ENCODE measurements at regions of chr19 and their contacts with region 1.

Region 1: GRCh38 chr19:48588670-48589399 is 17.7 kb upstream of the SPACA4 start:
- DNase-seq: peak; percentile 77 to 82 (median 81)
- H3K4me3 ChIP-seq: peak overlapping the region in 1 of 2 donors; percentile 49
- H3K4me3 Mint-ChIP-seq: peak overlapping the region; percentile 53 to 91 (median 80)
- H3K27ac ChIP-seq: no peak overlapping the region
- H3K27ac Mint-ChIP-seq: peak overlapping the region; percentile 49 to 84 (median 75)
- H3K4me1 ChIP-seq: peaks cover 17% of the 10 kb centered on the region
- H3K4me1 Mint-ChIP-seq: peaks cover 13 to 33% (median 21%) of the 10 kb centered on the region in 4 donors
- H3K27me3 ChIP-seq: no peaks in the 10 kb centered on the region
- H3K27me3 Mint-ChIP-seq: no peaks in the 10 kb centered on the region

Region 2: DNA sequence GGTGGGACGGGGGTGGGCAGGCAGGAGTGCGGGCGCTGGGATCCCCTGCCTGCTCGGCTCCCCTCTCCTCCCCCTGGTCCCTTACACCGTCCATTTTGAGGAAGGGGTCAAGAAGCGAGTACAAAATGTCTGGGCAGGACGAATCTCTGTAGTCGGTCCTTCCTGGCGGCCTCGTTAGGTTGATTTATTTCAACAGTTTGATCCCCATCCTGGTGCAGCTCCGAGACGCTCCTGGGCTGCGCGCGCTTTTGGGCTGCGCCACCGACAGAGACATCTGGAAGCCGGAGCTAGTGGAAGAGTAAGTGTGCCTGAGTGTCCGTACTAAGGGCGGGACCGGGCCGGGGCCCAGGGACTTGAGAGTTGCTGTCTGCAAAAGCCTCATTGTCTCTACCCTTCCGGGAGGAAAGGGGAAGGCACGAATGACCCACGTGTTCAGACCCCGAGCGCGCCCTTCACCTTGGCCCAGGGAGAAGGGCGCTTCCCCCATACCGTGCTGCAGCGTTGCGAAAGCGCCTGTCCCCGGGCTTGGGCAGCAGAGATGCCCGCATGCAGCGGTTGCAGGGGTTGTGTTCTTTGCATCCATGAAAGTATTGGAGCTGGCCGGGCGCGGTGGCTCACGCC is 317.2 kb before region 1 on chr19:
- CTCF ChIA-PET with region 1: interaction called, 6 read pairs
- POLR2A ChIA-PET with region 1: no interaction called
- intact Hi-C with region 1: loop called (anchors 1 kb)
- DNase-seq: no peak
- H3K4me3 ChIP-seq: peak overlapping the region in 1 of 2 donors; percentile 19
- H3K4me3 Mint-ChIP-seq: peak overlapping the region; percentile 70 to 90 (median 80)
- H3K27ac ChIP-seq: no peak overlapping the region
- H3K27ac Mint-ChIP-seq: peak overlapping the region in 2 of 7 donors; percentile 63 to 70
- H3K4me1 ChIP-seq: peaks cover 4% of the 10 kb centered on the region
- H3K4me1 Mint-ChIP-seq: peaks cover 5 to 24% (median 15%) of the 10 kb centered on the region in 4 donors
- H3K27me3 ChIP-seq: no peaks in the 10 kb centered on the region
- H3K27me3 Mint-ChIP-seq: peaks cover 8 to 12% of the 10 kb centered on the region in 2 donors

Region 3: GRCh38 chr19:48492925-48493717 is 95.7 kb before region 1 on chr19:
- CTCF ChIA-PET with region 1: interaction called, 132 read pairs
- POLR2A ChIA-PET with region 1: interaction called, 8 read pairs
- intact Hi-C with region 1: loop called (anchors 1 kb)
- DNase-seq: peak; percentile 75 to 87 (median 77)
- H3K4me3 ChIP-seq: peak overlapping the region in 1 of 2 donors; percentile 47
- H3K4me3 Mint-ChIP-seq: peak overlapping the region; percentile 52 to 79 (median 70)
- H3K27ac ChIP-seq: no peak overlapping the region
- H3K27ac Mint-ChIP-seq: peak overlapping the region in 5 of 7 donors; percentile 51 to 84 (median 60)
- H3K4me1 ChIP-seq: peaks cover 40% of the 10 kb centered on the region
- H3K4me1 Mint-ChIP-seq: peaks cover 15 to 53% (median 28%) of the 10 kb centered on the region in 4 donors
- H3K27me3 ChIP-seq: peaks cover 15% of the 10 kb centered on the region
- H3K27me3 Mint-ChIP-seq: peaks cover 22 to 28% of the 10 kb centered on the region in 2 donors

Region 4: GRCh38 chr19:48501496-48502350 is 87.1 kb before region 1 on chr19:
- CTCF ChIA-PET with region 1: interaction called, 203 read pairs
- POLR2A ChIA-PET with region 1: interaction called, 11 read pairs
- intact Hi-C with region 1: loop called (anchors 1 kb)
- DNase-seq: peak; percentile 68 to 82 (median 76)
- H3K4me3 ChIP-seq: no peak overlapping the region
- H3K4me3 Mint-ChIP-seq: peak overlapping the region; percentile 22 to 82 (median 76)
- H3K27ac ChIP-seq: peak overlapping the region; percentile 26
- H3K27ac Mint-ChIP-seq: peak overlapping the region in 6 of 7 donors; percentile 48 to 87 (median 78)
- H3K4me1 ChIP-seq: peaks cover 13% of the 10 kb centered on the region
- H3K4me1 Mint-ChIP-seq: peaks cover 5 to 27% (median 14%) of the 10 kb centered on the region in 4 donors
- H3K27me3 ChIP-seq: no peaks in the 10 kb centered on the region
- H3K27me3 Mint-ChIP-seq: peaks cover 4 to 10% of the 10 kb centered on the region in 2 donors

Region 5: GRCh38 chr19:48513289-48514122 is 75.3 kb before region 1 on chr19:
- CTCF ChIA-PET with region 1: interaction called, 203 read pairs
- POLR2A ChIA-PET with region 1: interaction called, 4 read pairs
- intact Hi-C with region 1: no loop called
- DNase-seq: peak; percentile 70 to 88 (median 73)
- H3K4me3 ChIP-seq: peak overlapping the region; percentile 65 to 89
- H3K4me3 Mint-ChIP-seq: no peak overlapping the region
- H3K27ac ChIP-seq: peak overlapping the region; percentile 59
- H3K27ac Mint-ChIP-seq: peak overlapping the region in 3 of 7 donors; percentile 68 to 96 (median 91)
- H3K4me1 ChIP-seq: peaks cover 27% of the 10 kb centered on the region
- H3K4me1 Mint-ChIP-seq: peaks cover 6 to 16% (median 11%) of the 10 kb centered on the region in 4 donors
- H3K27me3 ChIP-seq: no peaks in the 10 kb centered on the region
- H3K27me3 Mint-ChIP-seq: no peaks in the 10 kb centered on the region

Region 6: GRCh38 chr19:48608798-48609263 is 20.0 kb after region 1 on chr19:
- CTCF ChIA-PET with region 1: interaction called, 82 read pairs
- POLR2A ChIA-PET with region 1: interaction called, 5 read pairs
- intact Hi-C with region 1: loop called (anchors 1 kb)
- DNase-seq: peak; percentile 57 to 63 (median 60)
- H3K4me3 ChIP-seq: no peak overlapping the region
- H3K4me3 Mint-ChIP-seq: peak overlapping the region in 6 of 8 donors; percentile 24 to 73 (median 53)
- H3K27ac ChIP-seq: no peak overlapping the region
- H3K27ac Mint-ChIP-seq: peak overlapping the region in 5 of 7 donors; percentile 22 to 94 (median 73)
- H3K4me1 ChIP-seq: no peaks in the 10 kb centered on the region
- H3K4me1 Mint-ChIP-seq: peaks cover 2 to 6% (median 5%) of the 10 kb centered on the region in 4 donors
- H3K27me3 ChIP-seq: no peaks in the 10 kb centered on the region
- H3K27me3 Mint-ChIP-seq: no peaks in the 10 kb centered on the region

Region 7: DNA sequence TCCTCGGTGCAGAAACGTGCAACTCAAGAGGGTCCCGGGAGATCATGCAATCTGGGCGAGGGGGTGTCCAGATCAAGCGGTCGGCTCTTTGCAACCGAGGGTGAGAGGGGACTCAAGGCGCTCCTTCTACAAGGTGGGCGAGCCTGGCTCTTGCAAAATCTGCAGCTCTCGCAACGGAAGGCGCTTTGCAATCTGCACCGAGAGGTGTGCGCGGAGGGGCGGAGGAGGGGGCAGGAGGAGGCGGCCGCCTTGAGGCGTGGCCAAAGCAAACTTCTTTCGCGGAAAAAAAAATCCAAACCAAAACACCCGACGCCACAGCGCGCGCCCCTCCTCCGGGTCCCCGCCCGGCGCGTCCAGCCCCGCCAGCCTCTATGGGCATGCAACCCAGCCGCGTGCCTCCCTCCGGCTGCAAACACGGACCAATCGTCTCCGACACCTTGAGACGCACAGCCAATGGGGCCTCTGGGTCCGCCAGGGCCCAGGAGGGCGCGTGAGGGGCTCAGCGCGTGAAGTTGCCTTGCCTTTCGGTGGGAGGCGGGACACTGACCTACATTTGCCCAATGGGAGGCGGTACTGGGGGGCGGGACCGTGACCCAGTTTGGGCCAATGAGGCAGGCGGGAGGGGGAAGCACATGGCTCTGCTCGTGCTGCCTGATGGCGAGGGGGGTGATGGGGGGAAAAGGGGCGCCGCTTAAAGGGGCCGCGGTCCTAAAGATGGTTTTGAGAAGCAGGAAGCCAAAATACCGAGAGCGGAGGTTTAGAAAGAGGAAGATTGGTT is 48.5 kb after region 1 on chr19 and contains the start of gene DBP:
- CTCF ChIA-PET with region 1: no interaction called
- POLR2A ChIA-PET with region 1: interaction called, 4 read pairs
- intact Hi-C with region 1: loop called (anchors 1 kb)
- DNase-seq: peak in 4 of 5 donors; percentile 99 to 100 (median 100)
- H3K4me3 ChIP-seq: peak within 1 kb of the TSS; percentile 52 to 88
- H3K4me3 Mint-ChIP-seq: peak within 1 kb of the TSS; percentile 89 to 100 (median 99)
- H3K27ac ChIP-seq: peak within 1 kb of the TSS; percentile 88
- H3K27ac Mint-ChIP-seq: peak within 1 kb of the TSS; percentile 93 to 100 (median 99)
- H3K4me1 ChIP-seq: peaks cover 46% of the 10 kb centered on the region
- H3K4me1 Mint-ChIP-seq: peaks cover 20 to 55% (median 40%) of the 10 kb centered on the region in 4 donors
- H3K27me3 ChIP-seq: no peaks in the 10 kb centered on the region
- H3K27me3 Mint-ChIP-seq: no peaks in the 10 kb centered on the region
- total RNA-seq, gene DBP: 62.6 to 69.5 TPM

Region 8: DNA sequence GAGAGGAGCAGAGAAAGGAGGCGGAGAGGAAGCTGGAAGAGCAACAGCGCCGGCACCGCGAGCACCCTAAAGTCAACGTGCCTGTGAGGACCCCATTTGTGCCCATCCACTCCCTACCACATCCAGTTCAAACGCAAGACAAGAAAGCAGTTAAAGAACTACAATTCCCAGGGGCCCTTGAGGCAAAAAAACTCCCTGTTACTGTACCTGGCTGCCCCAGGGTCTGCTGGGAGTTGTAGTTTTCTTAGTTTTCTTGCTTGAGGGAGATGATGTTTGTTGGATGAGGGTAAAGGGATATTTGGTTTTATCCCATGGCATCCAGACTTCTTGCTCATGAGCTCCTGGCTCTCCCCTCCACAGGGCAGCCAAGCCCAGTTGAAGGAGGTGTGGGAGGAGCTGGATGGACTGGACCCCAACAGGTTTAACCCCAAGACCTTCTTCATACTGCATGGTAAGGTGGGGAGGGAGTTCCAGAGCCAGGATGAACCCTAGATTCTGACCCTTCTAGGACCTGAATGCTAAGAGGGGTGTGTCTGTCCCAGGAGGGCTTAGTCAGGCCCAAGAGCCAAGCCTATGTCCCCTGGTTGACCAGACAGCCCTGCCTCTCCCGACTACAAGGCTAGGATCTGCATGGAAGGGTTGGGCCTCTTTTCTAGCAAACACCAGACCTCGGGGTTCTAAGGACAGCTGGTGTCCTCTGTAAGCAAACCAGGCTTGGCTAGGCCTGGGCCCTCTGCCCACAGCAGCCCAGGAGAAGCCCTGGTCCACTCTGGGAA is 324.5 kb after region 1 on chr19:
- CTCF ChIA-PET with region 1: no interaction called
- POLR2A ChIA-PET with region 1: no interaction called
- intact Hi-C with region 1: no loop called
- DNase-seq: peak in 4 of 5 donors; percentile 22 to 61 (median 32)
- H3K4me3 ChIP-seq: no peak overlapping the region
- H3K4me3 Mint-ChIP-seq: no peak overlapping the region
- H3K27ac ChIP-seq: no peak overlapping the region
- H3K27ac Mint-ChIP-seq: peak overlapping the region in 3 of 7 donors; percentile 47 to 72 (median 48)
- H3K4me1 ChIP-seq: no peaks in the 10 kb centered on the region
- H3K4me1 Mint-ChIP-seq: peaks cover 0 to 1% (median 0%) of the 10 kb centered on the region in 4 donors
- H3K27me3 ChIP-seq: no peaks in the 10 kb centered on the region
- H3K27me3 Mint-ChIP-seq: no peaks in the 10 kb centered on the region